ENCODE measurements at regions of chr1 and their contacts with region 1.

Region 1: DNA sequence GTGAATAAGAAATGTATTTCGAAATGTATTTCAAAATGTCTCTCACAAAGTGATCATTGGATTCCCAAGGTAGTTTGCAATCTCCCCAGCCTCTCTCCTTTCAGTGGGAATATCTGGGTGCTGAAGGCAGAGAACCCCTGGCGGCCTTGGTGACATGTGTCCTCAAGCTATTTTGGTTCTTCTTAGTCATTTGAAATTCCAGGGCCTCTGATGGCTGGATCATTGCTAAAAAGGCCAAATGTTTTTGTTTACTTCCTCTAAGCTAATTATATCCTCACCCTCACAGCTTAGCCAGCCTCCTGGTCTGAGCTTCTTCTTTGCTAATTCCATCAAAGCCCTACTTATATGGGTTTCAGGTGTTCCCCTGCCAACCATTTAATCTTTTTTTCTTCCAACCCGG is 71.2 kb downstream of the LRRC40 start:
- DNase-seq: no peak
- CTCF ChIP-seq: no peak

Region 2: DNA sequence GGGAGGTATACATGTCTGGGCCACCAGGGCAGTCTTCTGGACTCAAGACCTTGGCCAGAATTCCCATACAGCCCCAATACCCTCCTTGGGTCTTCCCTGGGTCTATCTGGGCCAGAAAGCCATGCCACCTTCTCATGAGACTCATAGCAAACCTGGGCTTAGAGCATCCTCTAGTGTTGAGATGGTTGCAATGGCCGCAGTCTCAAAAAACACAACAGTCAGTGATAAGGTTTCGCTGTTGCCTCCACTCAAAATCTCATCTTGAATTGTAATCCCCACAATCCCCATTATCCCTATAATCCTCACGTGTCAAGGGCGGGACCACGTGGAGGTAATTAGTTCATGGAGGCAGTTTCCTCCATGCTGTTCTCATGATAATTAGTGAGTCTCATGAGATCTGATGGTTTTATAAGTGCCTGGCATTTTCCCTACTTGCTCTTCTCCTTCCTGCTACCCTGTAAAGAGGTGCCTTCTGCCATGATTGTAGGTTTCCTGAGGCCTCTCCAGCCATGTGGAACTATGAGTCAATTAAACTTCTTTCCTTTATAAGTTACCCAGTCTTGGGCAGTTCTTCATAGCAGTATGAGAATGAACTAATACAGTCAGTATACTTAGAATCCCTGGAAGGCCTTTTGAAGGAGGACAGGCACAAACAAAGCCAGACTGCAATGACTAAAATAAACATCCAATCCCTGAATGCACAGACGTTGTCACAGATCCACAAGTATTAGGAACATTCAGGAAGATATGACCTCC is 353.9 kb after region 1 on chr1:
- in situ Hi-C with region 1: loop called (anchors 10 kb)
- DNase-seq: peak; percentile 31
- CTCF ChIP-seq: peak; percentile 61

Region 3: DNA sequence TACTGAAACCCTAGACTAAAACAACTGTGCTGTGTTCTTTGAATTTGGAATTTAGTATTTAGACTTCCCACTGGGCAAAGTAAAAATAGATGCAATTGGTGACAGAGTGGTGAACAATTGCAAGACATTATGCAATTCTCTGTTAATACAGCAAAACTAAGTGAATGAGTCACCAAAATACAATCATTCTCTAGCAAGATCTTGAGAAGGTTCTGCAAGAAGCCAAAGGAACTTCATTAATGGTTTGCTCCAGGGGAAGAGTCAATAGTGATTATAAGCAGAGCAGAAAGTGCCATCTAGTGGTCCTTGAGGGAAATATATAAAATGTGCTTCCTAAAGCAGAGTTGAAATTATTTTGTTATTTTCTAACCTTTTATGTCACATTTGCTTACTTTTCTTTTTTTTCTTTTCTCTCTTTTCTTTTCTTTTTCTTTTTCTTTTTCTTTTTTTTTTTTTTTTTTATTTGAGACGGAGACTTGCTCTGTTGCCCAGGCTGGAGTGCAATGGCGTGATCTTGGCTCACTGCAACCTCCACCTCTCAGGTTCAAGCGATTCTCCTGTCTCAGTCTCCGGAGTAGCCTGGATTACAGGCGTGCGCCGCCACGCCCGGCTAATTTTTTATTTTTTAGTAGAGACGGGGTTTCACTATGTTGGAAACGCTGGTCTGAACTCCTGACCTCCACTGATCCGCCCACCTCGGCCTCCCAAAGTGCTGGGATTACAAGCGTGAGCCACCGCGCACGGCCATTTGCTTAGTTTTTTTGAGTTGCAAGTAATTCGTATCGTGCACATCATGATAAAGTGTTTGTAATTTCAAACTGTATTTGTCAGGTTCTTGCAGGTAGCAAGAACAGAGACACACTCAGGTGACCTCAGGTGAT is 376.1 kb after region 1 on chr1:
- in situ Hi-C with region 1: loop called (anchors 10 kb)
- DNase-seq: peak; percentile 53
- CTCF ChIP-seq: peak; percentile 54

Measured in GM13976 (cell line).